ENCODE measurements at regions of chr2 and their contacts with region 1.

Region 1: GRCh38 chr2:113309655-113310387 is 31.1 kb upstream of the PAX8 start:
- DNase-seq: peak; percentile 39 to 45
- H3K4me3 ChIP-seq: no peak overlapping the region
- H3K27ac ChIP-seq: peak overlapping the region in 1 of 3 donors; percentile 11
- H3K4me1 ChIP-seq: peaks cover 7 to 9% of the 10 kb centered on the region in 2 donors
- H3K27me3 ChIP-seq: no peaks in the 10 kb centered on the region
- CTCF ChIP-seq: no peak
- POLR2A ChIP-seq: no peak

Region 2: DNA sequence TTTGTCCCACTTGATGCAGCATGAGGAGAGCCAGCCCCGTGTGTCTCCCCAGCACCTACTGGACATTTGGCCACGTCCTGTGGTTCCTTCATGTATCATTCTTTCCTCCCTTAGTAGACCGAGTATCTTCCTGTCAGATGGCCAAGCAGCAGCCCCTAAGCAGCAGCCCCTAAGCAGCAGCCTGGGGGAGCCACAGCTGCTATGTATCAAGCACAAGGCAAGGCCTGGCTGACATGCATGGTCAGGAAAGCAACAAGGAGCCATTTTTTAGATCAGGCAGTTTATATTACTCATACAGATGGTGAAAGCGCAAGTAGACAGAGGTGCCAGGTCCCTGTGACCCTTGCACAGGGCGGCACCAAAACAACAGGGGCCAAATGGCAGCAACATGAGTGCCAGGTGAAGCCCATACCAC is 703.3 kb before region 1 on chr2:
- intact Hi-C with region 1: no loop called
- DNase-seq: no peak
- H3K4me3 ChIP-seq: no peak overlapping the region
- H3K27ac ChIP-seq: no peak overlapping the region
- H3K4me1 ChIP-seq: no peaks in the 10 kb centered on the region
- H3K27me3 ChIP-seq: no peaks in the 10 kb centered on the region
- CTCF ChIP-seq: no peak
- POLR2A ChIP-seq: no peak

Region 3: GRCh38 chr2:113342650-113343049 is 32.8 kb after region 1 on chr2:
- intact Hi-C with region 1: loop called (anchors 2 kb)
- DNase-seq: no peak
- H3K4me3 ChIP-seq: no peak overlapping the region
- H3K27ac ChIP-seq: no peak overlapping the region
- H3K4me1 ChIP-seq: peaks cover 0 to 20% of the 10 kb centered on the region in 2 donors
- H3K27me3 ChIP-seq: no peaks in the 10 kb centered on the region
- CTCF ChIP-seq: no peak
- POLR2A ChIP-seq: no peak